ENCODE measurements at regions of chr7 and their contacts with region 1.

Region 1: DNA sequence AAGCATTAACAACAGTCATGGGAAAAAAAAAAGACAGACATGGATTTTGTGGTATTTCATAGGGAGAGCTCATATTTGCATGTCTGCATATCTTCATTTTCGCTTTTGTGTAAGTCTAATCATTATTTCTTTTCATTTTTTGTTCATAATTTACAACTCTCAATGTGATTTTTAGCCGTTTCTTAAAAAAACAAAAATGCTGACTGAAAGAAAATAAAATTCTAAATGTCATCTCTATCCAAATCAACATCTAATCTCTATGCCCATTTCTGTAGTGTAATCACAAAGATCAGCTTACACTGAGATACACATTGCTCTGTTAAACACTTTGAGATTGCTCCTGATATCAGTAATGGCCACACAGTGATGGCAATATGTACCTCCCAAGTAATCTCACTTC is 29.2 kb downstream of the CHRM2 start:
- DNase-seq: no peak
- H3K4me3 Mint-ChIP-seq: no peak overlapping the region
- H3K27ac Mint-ChIP-seq: no peak overlapping the region
- H3K4me1 Mint-ChIP-seq: no peaks in the 10 kb centered on the region
- H3K27me3 Mint-ChIP-seq: no peaks in the 10 kb centered on the region

Region 2: DNA sequence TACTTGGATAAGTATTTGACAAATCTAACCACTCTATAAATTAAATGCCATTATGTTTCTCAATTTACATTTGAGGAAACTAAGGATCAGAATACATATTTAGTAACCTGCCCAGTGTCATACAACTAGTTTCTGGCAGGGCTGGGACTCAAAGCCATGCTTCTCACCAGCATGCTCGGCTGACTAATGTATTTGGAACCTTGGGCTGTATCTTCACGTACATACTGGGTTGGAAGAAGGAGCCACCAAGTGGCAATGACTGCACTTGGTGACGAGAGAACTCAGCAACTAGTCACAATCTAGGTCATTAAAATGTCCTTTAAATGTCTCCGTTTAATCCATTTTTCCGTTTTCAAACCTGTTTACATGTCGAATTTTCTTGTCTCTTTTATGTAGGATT is 13.7 kb after region 1 on chr7:
- CTCF ChIA-PET with region 1: no interaction called
- POLR2A ChIA-PET with region 1: no interaction called
- DNase-seq: no peak
- H3K4me3 Mint-ChIP-seq: no peak overlapping the region
- H3K27ac Mint-ChIP-seq: no peak overlapping the region
- H3K4me1 Mint-ChIP-seq: no peaks in the 10 kb centered on the region
- H3K27me3 Mint-ChIP-seq: no peaks in the 10 kb centered on the region

Region 3: GRCh38 chr7:137151041-137151689 is 253.5 kb after region 1 on chr7:
- CTCF ChIA-PET with region 1: no interaction called
- POLR2A ChIA-PET with region 1: interaction called, 15 read pairs
- DNase-seq: no peak
- H3K4me3 Mint-ChIP-seq: no peak overlapping the region
- H3K27ac Mint-ChIP-seq: no peak overlapping the region
- H3K4me1 Mint-ChIP-seq: no peaks in the 10 kb centered on the region
- H3K27me3 Mint-ChIP-seq: no peaks in the 10 kb centered on the region

Measured in activated CD4-positive, alpha-beta T cell treated with anti-CD3 and anti-CD28 coated beads, Interleukin-2, amount 10 ng/mL, durations not matched to agents 7 days and 5 days (primary cell).